Endothelial cell of umbilical vein (primary cell): ENCODE measurements at regions of chrX and their contacts with region 1.

Region 1: GRCh38 chrX:40207626-40208025 is 109.9 kb upstream of the BCOR start:
- DNase-seq: no peak
- H3K4me3 ChIP-seq: no peak overlapping the region
- H3K27ac ChIP-seq: no peak overlapping the region
- H3K4me1 ChIP-seq: no peaks in the 10 kb centered on the region
- H3K27me3 ChIP-seq: no peaks in the 10 kb centered on the region
- CTCF ChIP-seq: no peak
- POLR2A ChIP-seq: no peak

Region 2: DNA sequence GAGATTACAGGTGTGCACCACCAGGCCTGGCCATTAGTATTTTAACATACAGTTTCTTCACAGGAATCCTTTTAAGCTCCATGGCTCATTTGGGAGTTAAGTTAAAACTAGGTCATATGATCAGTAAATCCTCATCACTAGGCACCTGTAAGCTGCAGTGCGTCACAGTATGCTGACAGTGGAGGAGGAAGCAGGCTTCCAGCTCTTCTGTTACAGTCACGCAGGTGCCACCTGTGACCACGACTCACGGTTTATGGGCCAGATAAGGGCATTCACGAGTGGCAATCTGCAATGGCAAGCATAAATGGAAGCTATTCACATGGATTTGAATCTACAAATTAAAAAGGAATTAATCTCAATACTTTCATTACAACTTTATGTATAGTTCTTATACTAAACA is 19.5 kb after region 1 on chrX:
- CTCF ChIA-PET with region 1: no interaction called
- POLR2A ChIA-PET with region 1: no interaction called
- dilution Hi-C with region 1: no loop called
- intact Hi-C with region 1: no loop called
- DNase-seq: no peak
- H3K4me3 ChIP-seq: no peak overlapping the region
- H3K27ac ChIP-seq: no peak overlapping the region
- H3K4me1 ChIP-seq: no peaks in the 10 kb centered on the region
- H3K27me3 ChIP-seq: no peaks in the 10 kb centered on the region
- CTCF ChIP-seq: no peak
- POLR2A ChIP-seq: no peak

Region 3: GRCh38 chrX:40329616-40330015 is 122.0 kb after region 1 on chrX:
- CTCF ChIA-PET with region 1: no interaction called
- POLR2A ChIA-PET with region 1: interaction called, 11 read pairs
- dilution Hi-C with region 1: no loop called
- intact Hi-C with region 1: no loop called
- DNase-seq: no peak
- H3K4me3 ChIP-seq: no peak overlapping the region
- H3K27ac ChIP-seq: no peak overlapping the region
- H3K4me1 ChIP-seq: no peaks in the 10 kb centered on the region
- H3K27me3 ChIP-seq: no peaks in the 10 kb centered on the region
- CTCF ChIP-seq: no peak
- POLR2A ChIP-seq: no peak